ENCODE measurements at regions of chr1 and their contacts with region 1.

Region 1: DNA sequence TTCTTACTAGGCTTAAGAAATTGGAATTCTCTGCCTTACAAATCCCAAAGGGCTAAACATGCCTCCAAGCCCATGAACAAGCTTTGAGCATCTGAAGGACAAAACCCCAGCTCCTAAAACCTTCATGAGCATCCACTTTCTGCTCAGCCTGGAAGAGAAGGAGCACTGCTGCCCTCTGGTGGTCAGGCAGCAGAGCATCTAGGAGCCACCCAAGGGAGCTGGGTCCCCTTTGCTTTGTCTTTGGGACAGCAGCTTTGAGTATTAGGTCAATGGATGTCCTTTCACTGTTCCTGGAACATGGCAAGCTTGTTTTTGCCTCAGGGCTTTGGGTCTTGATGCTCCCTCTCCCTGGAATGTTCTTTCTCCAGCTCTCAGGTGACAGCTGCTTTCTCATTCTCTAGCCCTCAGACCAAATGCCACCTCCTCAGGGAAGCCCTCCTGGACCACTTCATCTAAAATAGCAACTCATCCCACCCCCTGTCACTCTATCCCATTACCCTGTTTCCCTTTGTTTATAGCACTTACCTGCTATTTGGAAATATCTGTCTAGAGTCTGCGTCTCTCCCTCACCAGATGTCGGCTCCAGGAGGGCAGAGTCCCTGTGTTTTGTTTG is 25.7 kb downstream of the RAB7B start:
- DNase-seq: peak; percentile 90
- ATAC-seq: peak; percentile 89
- H3K4me3 Mint-ChIP-seq: no peak overlapping the region
- H3K27ac Mint-ChIP-seq: no peak overlapping the region
- H3K4me1 Mint-ChIP-seq: no peaks in the 10 kb centered on the region
- H3K27me3 Mint-ChIP-seq: no peaks in the 10 kb centered on the region

Region 2: GRCh38 chr1:205729945-205730610 is 247.4 kb before region 1 on chr1:
- CTCF ChIA-PET with region 1: interaction called, 10 read pairs
- POLR2A ChIA-PET with region 1: no interaction called
- intact Hi-C with region 1: no loop called
- DNase-seq: no peak
- ATAC-seq: no peak
- H3K4me3 Mint-ChIP-seq: no peak overlapping the region
- H3K27ac Mint-ChIP-seq: peak overlapping the region; percentile 16
- H3K4me1 Mint-ChIP-seq: peaks cover 34% of the 10 kb centered on the region
- H3K27me3 Mint-ChIP-seq: no peaks in the 10 kb centered on the region

Region 3: GRCh38 chr1:205832326-205832751 is 145.2 kb before region 1 on chr1:
- CTCF ChIA-PET with region 1: no interaction called
- POLR2A ChIA-PET with region 1: no interaction called
- intact Hi-C with region 1: no loop called
- DNase-seq: no peak
- ATAC-seq: no peak
- H3K4me3 Mint-ChIP-seq: no peak overlapping the region
- H3K27ac Mint-ChIP-seq: no peak overlapping the region
- H3K4me1 Mint-ChIP-seq: no peaks in the 10 kb centered on the region
- H3K27me3 Mint-ChIP-seq: no peaks in the 10 kb centered on the region

Region 4: GRCh38 chr1:205896320-205896719 is 81.2 kb before region 1 on chr1:
- CTCF ChIA-PET with region 1: interaction called, 11 read pairs
- POLR2A ChIA-PET with region 1: no interaction called
- intact Hi-C with region 1: no loop called
- DNase-seq: no peak
- ATAC-seq: no peak
- H3K4me3 Mint-ChIP-seq: no peak overlapping the region
- H3K27ac Mint-ChIP-seq: no peak overlapping the region
- H3K4me1 Mint-ChIP-seq: peaks cover 2% of the 10 kb centered on the region
- H3K27me3 Mint-ChIP-seq: peaks cover 17% of the 10 kb centered on the region

Region 5: GRCh38 chr1:205942631-205943159 is 34.8 kb before region 1 on chr1:
- CTCF ChIA-PET with region 1: interaction called, 10 read pairs
- POLR2A ChIA-PET with region 1: no interaction called
- intact Hi-C with region 1: no loop called
- DNase-seq: no peak
- ATAC-seq: no peak
- H3K4me3 Mint-ChIP-seq: no peak overlapping the region
- H3K27ac Mint-ChIP-seq: no peak overlapping the region
- H3K4me1 Mint-ChIP-seq: no peaks in the 10 kb centered on the region
- H3K27me3 Mint-ChIP-seq: peaks cover 26% of the 10 kb centered on the region

Region 6: DNA sequence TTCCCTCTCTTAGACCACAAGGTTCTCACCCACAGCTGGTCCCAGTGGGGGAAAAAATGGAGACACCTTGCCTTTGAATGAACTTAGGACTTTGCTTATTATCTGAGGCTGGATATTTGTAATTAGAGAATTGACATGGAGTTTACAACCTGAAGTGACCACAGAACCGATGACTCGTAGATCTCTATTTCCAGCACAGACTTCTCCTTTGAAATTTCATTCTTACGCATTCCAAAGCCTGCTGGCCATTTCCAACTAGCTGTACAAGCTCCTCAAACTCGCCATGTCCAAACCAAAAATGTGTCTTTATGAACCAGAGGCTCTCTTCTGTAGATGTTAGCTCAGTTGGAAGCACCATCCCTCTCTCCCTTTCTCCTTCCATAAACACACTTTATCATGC is 13.7 kb after region 1 on chr1:
- CTCF ChIA-PET with region 1: interaction called, 16 read pairs
- POLR2A ChIA-PET with region 1: no interaction called
- intact Hi-C with region 1: no loop called
- DNase-seq: no peak
- ATAC-seq: no peak
- H3K4me3 Mint-ChIP-seq: no peak overlapping the region
- H3K27ac Mint-ChIP-seq: no peak overlapping the region
- H3K4me1 Mint-ChIP-seq: no peaks in the 10 kb centered on the region
- H3K27me3 Mint-ChIP-seq: peaks cover 13% of the 10 kb centered on the region

Region 7: GRCh38 chr1:206106328-206107167 is 129.0 kb after region 1 on chr1:
- CTCF ChIA-PET with region 1: interaction called, 79 read pairs
- POLR2A ChIA-PET with region 1: no interaction called
- intact Hi-C with region 1: no loop called
- DNase-seq: peak; percentile 88
- ATAC-seq: peak; percentile 90
- H3K4me3 Mint-ChIP-seq: no peak overlapping the region
- H3K27ac Mint-ChIP-seq: no peak overlapping the region
- H3K4me1 Mint-ChIP-seq: no peaks in the 10 kb centered on the region
- H3K27me3 Mint-ChIP-seq: no peaks in the 10 kb centered on the region

Region 8: GRCh38 chr1:206469933-206470691 is 492.6 kb after region 1 on chr1 and contains the start of gene IKBKE:
- CTCF ChIA-PET with region 1: no interaction called
- POLR2A ChIA-PET with region 1: no interaction called
- intact Hi-C with region 1: no loop called
- DNase-seq: peak; percentile 74
- ATAC-seq: peak; percentile 53
- H3K4me3 Mint-ChIP-seq: peak within 1 kb of the TSS; percentile 83
- H3K27ac Mint-ChIP-seq: peak within 1 kb of the TSS; percentile 91
- H3K4me1 Mint-ChIP-seq: peaks cover 92% of the 10 kb centered on the region
- H3K27me3 Mint-ChIP-seq: no peaks in the 10 kb centered on the region
- total RNA-seq, gene IKBKE: 15.3 to 17.2 TPM

Measured in activated CD4-positive, alpha-beta T cell treated with anti-CD3 and anti-CD28 coated beads for 36 hours (primary cell).